ENCODE measurements at regions of chr7 and their contacts with region 1.

Region 1: DNA sequence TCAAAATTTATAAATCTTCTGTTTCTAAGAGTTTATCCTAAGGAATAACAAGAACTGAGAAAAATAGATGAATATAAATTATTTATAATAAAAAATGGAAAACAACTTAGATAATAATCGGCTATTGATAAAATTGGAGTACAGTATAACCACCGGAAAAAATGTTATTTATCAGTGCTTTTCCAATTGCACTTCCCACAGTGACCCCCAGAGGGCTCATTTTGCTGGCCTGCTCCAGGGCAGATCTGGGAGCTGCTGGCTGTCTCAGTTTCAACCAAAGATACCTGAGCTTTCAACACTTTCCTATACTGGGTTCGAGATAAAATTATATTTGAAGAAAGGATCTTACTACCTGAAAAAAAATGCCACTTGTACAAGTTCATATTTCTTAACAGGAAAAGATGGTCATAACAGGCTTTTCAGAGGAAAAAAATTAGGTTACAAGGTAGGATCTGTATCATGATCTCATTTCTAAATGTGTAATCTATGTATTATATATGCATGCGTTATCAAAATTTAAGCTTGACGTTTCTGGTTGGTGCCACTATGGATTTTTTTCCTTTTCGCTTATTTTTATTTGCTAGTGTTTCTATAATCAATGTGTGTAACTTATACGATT is 165.7 kb downstream of the NPSR1 start:
- DNase-seq: peak; percentile 54
- H3K4me3 ChIP-seq: no peak overlapping the region
- H3K27ac ChIP-seq: no peak overlapping the region
- H3K4me1 ChIP-seq: peaks cover 7% of the 10 kb centered on the region
- H3K27me3 ChIP-seq: no peaks in the 10 kb centered on the region
- CTCF ChIP-seq: peak; percentile 89

Region 2: GRCh38 chr7:34928049-34928448 is 104.3 kb after region 1 on chr7:
- CTCF ChIA-PET with region 1: interaction called, 8 read pairs
- POLR2A ChIA-PET with region 1: no interaction called
- intact Hi-C with region 1: loop called (anchors 1 kb)
- DNase-seq: peak; percentile 67
- H3K4me3 ChIP-seq: no peak overlapping the region
- H3K27ac ChIP-seq: no peak overlapping the region
- H3K4me1 ChIP-seq: no peaks in the 10 kb centered on the region
- H3K27me3 ChIP-seq: no peaks in the 10 kb centered on the region
- CTCF ChIP-seq: peak; percentile 83

Region 3: DNA sequence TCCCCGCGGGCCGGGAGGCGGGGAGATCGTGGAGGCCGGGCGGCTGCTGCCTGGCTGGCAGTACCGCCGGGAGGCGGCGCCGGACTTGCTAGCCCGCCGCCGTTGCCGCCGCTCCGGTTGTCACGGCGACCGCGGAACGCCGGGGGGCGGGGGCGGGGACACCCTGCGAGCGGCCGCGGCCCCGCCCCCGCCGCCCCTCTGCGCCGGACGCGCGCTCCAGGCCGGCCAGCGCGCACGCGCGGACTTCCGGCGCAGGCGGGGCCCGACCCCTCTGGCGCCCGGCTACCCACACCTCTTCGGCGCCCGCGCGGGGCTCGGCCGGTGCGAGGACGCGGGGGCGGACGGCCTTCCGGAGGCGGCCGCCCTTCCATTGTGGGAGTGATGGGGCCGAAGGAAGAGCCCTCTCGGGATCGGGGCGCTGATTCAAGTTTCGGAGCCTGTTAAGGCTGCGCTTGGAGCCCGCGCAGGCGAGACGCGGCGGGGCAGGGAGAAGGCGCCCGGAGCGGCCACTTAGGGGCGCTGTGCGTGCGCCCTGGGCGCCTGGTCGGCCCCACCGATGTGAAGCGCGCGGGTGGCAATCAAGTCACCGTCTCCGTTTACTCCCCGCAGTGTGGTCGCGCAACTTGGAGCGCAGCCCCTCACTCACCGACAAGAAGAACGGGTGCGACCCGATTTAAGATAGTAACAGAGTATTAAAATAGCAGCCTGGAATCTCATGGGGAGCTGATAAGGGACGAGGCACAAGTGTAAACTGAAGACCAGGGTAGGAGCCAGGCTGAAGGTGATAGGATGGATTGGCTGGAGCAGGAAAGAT is 214.0 kb after region 1 on chr7:
- CTCF ChIA-PET with region 1: interaction called, 18 read pairs
- POLR2A ChIA-PET with region 1: no interaction called
- intact Hi-C with region 1: loop called (anchors 5 kb)
- DNase-seq: peak; percentile 95
- H3K4me3 ChIP-seq: peak overlapping the region; percentile 78
- H3K27ac ChIP-seq: peak overlapping the region; percentile 73
- H3K4me1 ChIP-seq: peaks cover 17% of the 10 kb centered on the region
- H3K27me3 ChIP-seq: no peaks in the 10 kb centered on the region
- CTCF ChIP-seq: peak; percentile 92

Measured in A673 (cell line).